Esophagus muscularis mucosa (tissue), 4 donors: ENCODE measurements at regions of chr11 and their contacts with region 1.

Region 1: DNA sequence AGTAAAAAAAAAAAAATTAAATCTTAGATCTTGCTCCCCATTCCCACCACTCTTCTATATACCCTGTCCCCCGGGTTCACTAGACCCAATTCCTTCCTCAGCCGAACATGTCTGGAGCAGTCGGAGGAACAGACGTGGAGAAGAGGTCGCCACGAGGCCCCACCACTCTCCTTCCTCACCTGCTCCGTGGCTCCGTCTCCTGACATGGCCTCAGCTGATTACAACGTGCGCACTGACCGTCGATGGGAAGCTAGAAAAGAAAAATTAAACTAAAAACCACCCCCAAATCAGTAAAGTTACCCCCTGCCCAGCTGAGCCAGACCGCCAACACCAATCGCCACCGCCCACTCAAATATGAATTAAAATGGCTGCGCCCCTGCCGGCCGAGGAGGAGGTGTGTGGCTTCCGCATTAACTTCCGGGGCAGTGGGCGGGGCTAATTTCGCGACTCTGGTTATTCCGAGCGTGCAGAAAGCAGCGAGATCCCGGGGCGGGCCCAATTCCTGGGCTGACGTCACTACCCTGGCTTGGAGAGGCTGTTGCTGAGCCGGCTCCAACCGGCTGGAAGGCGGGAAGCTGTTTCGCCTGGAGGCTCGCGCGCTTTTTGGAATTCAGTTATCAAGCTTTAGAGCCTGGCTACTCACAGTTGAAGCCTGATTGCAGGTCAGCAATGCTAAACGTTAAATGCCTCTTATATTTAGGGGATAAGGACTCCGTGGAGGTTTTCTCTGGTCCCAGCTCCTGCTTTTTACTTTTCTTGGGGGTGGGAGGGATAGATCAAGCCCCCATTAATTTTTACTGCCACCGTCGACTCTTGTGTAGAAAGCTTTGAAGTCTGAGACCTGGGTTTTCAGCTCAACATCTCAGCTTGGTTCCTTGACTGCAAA is at the start of gene CSTF3:
- DNase-seq: peak; percentile 100
- H3K4me3 ChIP-seq: peak within 1 kb of the TSS; percentile 63 to 75 (median 70)
- H3K27ac ChIP-seq: peak within 1 kb of the TSS; percentile 74 to 82 (median 80)
- H3K4me1 ChIP-seq: peaks cover 17 to 41% (median 38%) of the 10 kb centered on the region in 4 donors
- H3K27me3 ChIP-seq: no peaks in the 10 kb centered on the region
- CTCF ChIP-seq: peak; percentile 39 to 61 (median 54)
- EP300 ChIP-seq: no peak
- POLR2A ChIP-seq: no peak
- total RNA-seq, gene CSTF3: 7.1 to 12.5 (median 9.5) TPM

Region 2: GRCh38 chr11:33257897-33258630 is 96.7 kb after region 1 on chr11:
- intact Hi-C with region 1: loop called (anchors 2 kb)
- DNase-seq: peak; percentile 97
- H3K4me3 ChIP-seq: peak overlapping the region; percentile 81 to 99 (median 90)
- H3K27ac ChIP-seq: peak overlapping the region; percentile 96 to 100 (median 100)
- H3K4me1 ChIP-seq: peaks cover 28 to 47% (median 45%) of the 10 kb centered on the region in 4 donors
- H3K27me3 ChIP-seq: no peaks in the 10 kb centered on the region
- CTCF ChIP-seq: peak; percentile 28 to 48 (median 47)
- EP300 ChIP-seq: no peak
- POLR2A ChIP-seq: peak; percentile 74

Region 3: GRCh38 chr11:33329705-33330329 is 168.5 kb after region 1 on chr11:
- intact Hi-C with region 1: loop called (anchors 2 kb)
- DNase-seq: no peak
- H3K4me3 ChIP-seq: no peak overlapping the region
- H3K27ac ChIP-seq: no peak overlapping the region
- H3K4me1 ChIP-seq: peaks cover 54 to 70% (median 60%) of the 10 kb centered on the region in 4 donors
- H3K27me3 ChIP-seq: no peaks in the 10 kb centered on the region
- CTCF ChIP-seq: peak; percentile 57 to 66 (median 63)
- EP300 ChIP-seq: no peak
- POLR2A ChIP-seq: no peak

Region 4: DNA sequence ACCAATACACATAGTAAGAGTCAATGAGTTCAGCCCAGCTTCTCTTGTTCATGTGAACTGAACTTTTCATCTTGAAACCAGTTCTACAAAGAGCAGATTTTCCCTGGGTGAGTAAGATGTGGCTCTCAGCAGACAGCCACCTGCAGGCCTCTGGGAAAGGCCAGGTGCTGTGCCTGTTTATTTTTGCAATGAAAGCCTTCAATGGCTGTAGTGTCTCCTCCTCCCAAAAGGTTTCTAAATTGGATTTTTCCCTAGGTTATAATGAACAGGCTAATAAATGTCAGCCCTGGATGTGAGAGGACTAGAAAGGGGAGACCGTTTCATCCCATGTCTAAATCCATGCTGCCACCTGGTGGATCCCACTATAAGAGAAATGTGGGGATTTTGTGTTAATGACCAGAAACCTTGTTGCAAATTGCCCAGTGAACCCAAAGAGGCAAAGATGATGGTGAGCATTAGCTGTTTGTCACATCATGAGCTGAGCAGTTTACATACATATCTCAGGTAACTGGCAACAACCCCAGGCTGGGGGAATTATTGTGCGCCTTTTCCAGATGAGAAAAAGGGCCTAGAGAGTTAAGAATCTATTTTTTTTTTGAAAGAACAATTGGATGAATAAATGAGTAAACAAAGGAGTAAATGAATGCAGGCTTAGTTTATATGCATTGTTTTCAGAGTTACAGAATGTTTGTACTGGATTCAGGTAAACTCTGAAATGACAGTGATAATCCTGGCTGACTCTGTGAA is 526.5 kb after region 1 on chr11:
- intact Hi-C with region 1: loop called (anchors 10 kb)
- DNase-seq: no peak
- H3K4me3 ChIP-seq: no peak overlapping the region
- H3K27ac ChIP-seq: no peak overlapping the region
- H3K4me1 ChIP-seq: peaks cover 25 to 33% (median 30%) of the 10 kb centered on the region in 4 donors
- H3K27me3 ChIP-seq: no peaks in the 10 kb centered on the region
- CTCF ChIP-seq: peak; percentile 38 to 55 (median 53)
- EP300 ChIP-seq: no peak
- POLR2A ChIP-seq: no peak

Region 5: DNA sequence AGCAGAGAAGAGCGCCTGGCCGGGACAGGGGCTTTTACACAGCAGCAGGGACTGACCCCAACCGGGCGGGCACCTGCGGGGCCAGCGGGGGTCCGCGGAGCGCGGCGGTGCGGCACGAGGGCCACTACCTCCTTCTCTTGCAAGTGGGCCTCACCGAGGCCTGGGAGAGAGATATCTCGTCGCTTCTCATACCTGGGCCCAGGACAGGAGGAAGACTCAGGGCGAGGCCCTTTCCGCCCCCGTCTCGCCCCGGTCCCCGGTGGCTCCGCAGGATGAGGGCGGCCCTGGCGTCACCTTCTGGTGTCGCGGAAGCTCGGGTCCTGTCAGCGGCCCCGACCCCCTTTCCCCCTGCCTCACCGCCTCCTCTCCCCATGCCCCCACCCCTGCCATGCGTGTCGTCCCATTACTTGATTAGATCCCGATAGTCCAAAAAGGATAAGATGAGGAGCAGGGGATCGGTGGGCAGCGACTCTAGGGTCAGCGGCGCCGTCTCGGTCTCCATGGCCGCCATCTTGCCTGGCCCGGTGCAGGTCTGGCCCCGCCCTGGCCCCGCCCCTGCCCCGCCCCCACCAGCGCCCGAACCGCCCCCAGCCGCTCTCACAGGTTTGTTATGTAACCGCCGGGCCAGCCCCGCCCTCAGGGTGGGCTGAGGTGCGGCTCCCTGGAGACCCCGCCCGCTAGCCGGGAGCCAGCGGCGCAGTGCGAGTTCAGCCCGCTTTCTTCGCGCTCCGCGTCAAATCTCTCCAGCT is 612.8 kb after region 1 on chr11 and contains the start of gene FBXO3:
- intact Hi-C with region 1: loop called (anchors 10 kb)
- DNase-seq: peak; percentile 97
- H3K4me3 ChIP-seq: peak within 1 kb of the TSS; percentile 71 to 89 (median 84)
- H3K27ac ChIP-seq: peak within 1 kb of the TSS; percentile 85 to 91 (median 87)
- H3K4me1 ChIP-seq: peaks cover 42 to 66% (median 50%) of the 10 kb centered on the region in 4 donors
- H3K27me3 ChIP-seq: no peaks in the 10 kb centered on the region
- CTCF ChIP-seq: no peak
- EP300 ChIP-seq: no peak
- POLR2A ChIP-seq: no peak
- total RNA-seq, gene FBXO3: 26.5 to 49.2 (median 43.8) TPM